ENCODE measurements at regions of chr4 and their contacts with region 1.

Region 1: GRCh38 chr4:165355900-165356300 is 22.9 kb upstream of the CPE start:
- DNase-seq: peak; percentile 27
- H3K4me3 Mint-ChIP-seq: no peak overlapping the region
- H3K27ac Mint-ChIP-seq: no peak overlapping the region
- H3K4me1 Mint-ChIP-seq: peaks cover 24% of the 10 kb centered on the region
- H3K27me3 Mint-ChIP-seq: no peaks in the 10 kb centered on the region
- CTCF ChIP-seq: no peak

Region 2: GRCh38 chr4:165112368-165113139 is 243.3 kb before region 1 on chr4 and contains the start of gene TMEM192:
- CTCF ChIA-PET with region 1: no interaction called
- intact Hi-C with region 1: no loop called
- DNase-seq: peak; percentile 91
- H3K4me3 Mint-ChIP-seq: peak within 1 kb of the TSS; percentile 91
- H3K27ac Mint-ChIP-seq: peak within 1 kb of the TSS; percentile 89
- H3K4me1 Mint-ChIP-seq: no peaks in the 10 kb centered on the region
- H3K27me3 Mint-ChIP-seq: no peaks in the 10 kb centered on the region
- CTCF ChIP-seq: no peak
- total RNA-seq, gene TMEM192: 18.4 and 21.1 TPM in 2 replicates

Region 3: GRCh38 chr4:165440415-165441189 is 84.7 kb after region 1 on chr4:
- CTCF ChIA-PET with region 1: no interaction called
- intact Hi-C with region 1: no loop called
- DNase-seq: peak; percentile 10
- H3K4me3 Mint-ChIP-seq: no peak overlapping the region
- H3K27ac Mint-ChIP-seq: peak overlapping the region; percentile 40
- H3K4me1 Mint-ChIP-seq: no peaks in the 10 kb centered on the region
- H3K27me3 Mint-ChIP-seq: no peaks in the 10 kb centered on the region
- CTCF ChIP-seq: no peak

Region 4: GRCh38 chr4:165464813-165465381 is 109.0 kb after region 1 on chr4:
- CTCF ChIA-PET with region 1: no interaction called
- intact Hi-C with region 1: loop called (anchors 1 kb)
- DNase-seq: no peak
- H3K4me3 Mint-ChIP-seq: no peak overlapping the region
- H3K27ac Mint-ChIP-seq: no peak overlapping the region
- H3K4me1 Mint-ChIP-seq: no peaks in the 10 kb centered on the region
- H3K27me3 Mint-ChIP-seq: no peaks in the 10 kb centered on the region
- CTCF ChIP-seq: peak; percentile 17

Measured in Calu3 (cell line).